ENCODE measurements at regions of chr15 and their contacts with region 1.

Region 1: GRCh38 chr15:44593042-44593736 is 56.2 kb downstream of the EIF3J start:
- DNase-seq: peak; percentile 28
- H3K4me3 Mint-ChIP-seq: no peak overlapping the region
- H3K27ac Mint-ChIP-seq: no peak overlapping the region
- H3K4me1 Mint-ChIP-seq: no peaks in the 10 kb centered on the region
- H3K27me3 Mint-ChIP-seq: no peaks in the 10 kb centered on the region
- CTCF ChIP-seq: peak; percentile 38

Region 2: DNA sequence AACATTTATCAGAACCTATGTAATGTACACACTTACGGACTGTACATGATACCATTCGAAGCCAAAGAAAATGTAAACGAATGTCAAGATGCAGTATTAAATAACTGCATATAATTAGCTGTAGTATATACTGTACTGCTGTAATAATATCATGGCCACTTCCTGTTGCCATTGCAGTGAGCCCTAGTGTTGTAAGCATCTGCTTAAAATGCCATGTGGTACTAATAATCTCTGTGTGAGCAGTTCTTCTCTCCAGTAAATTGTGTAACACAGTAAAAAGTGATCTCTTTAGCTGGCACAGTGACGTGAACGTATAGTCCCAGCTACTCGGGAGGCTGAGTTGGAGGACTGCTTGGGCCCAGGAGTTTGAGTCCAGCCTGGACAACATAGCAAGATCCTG is 61.7 kb after region 1 on chr15:
- CTCF ChIA-PET with region 1: interaction called, 11 read pairs
- POLR2A ChIA-PET with region 1: no interaction called
- intact Hi-C with region 1: no loop called
- DNase-seq: no peak
- H3K4me3 Mint-ChIP-seq: no peak overlapping the region
- H3K27ac Mint-ChIP-seq: no peak overlapping the region
- H3K4me1 Mint-ChIP-seq: peaks cover 7% of the 10 kb centered on the region
- H3K27me3 Mint-ChIP-seq: no peaks in the 10 kb centered on the region
- CTCF ChIP-seq: no peak

Region 3: DNA sequence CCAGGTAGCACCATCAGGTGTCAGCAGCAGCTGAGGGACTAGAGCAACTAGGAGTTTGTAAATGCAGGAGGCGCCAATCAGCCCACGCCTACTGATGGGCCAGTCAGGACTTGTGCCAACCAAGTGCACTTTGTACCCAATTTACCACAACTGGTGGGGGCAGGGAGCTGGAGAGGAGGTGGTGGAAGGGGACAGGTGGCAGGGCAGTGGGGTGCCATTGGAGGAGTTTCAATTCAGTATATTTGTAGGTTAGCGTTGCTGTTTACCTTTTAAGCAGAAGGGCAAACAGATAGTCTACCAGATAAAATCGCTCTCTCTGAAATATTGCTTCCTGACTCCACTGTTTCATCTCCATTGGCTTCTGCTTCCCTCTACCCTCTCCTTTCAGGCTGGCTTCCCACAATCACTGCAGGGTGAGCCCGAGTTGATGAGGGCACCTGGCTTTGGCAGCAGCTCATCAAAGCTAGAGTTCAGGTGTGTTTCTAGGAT is 218.9 kb after region 1 on chr15:
- CTCF ChIA-PET with region 1: no interaction called
- POLR2A ChIA-PET with region 1: no interaction called
- intact Hi-C with region 1: no loop called
- DNase-seq: peak; percentile 31
- H3K4me3 Mint-ChIP-seq: no peak overlapping the region
- H3K27ac Mint-ChIP-seq: no peak overlapping the region
- H3K4me1 Mint-ChIP-seq: peaks cover 9% of the 10 kb centered on the region
- H3K27me3 Mint-ChIP-seq: no peaks in the 10 kb centered on the region
- CTCF ChIP-seq: no peak

Measured in MCF 10A (cell line).